AG04449 (cell line): ENCODE measurements at regions of chr12 and their contacts with region 1.

Region 1: GRCh38 chr12:115752913-115753726 is 524.4 kb downstream of the MED13L start:
- DNase-seq: peak; percentile 17
- H3K4me3 ChIP-seq: no peak overlapping the region
- CTCF ChIP-seq: peak; percentile 54

Region 2: GRCh38 chr12:114662512-114663177 is 1090.5 kb before region 1 on chr12:
- CTCF ChIA-PET with region 1: interaction called, 247 read pairs
- POLR2A ChIA-PET with region 1: no interaction called
- DNase-seq: peak; percentile 34
- H3K4me3 ChIP-seq: no peak overlapping the region
- CTCF ChIP-seq: peak; percentile 86